ENCODE measurements at regions of chr7 and their contacts with region 1.

Region 1: GRCh38 chr7:106915873-106916272 is 50.8 kb downstream of the PIK3CG start:
- DNase-seq: peak; percentile 34
- ATAC-seq: peak; percentile 92
- H3K4me3 Mint-ChIP-seq: no peak overlapping the region
- H3K27ac Mint-ChIP-seq: no peak overlapping the region
- H3K4me1 Mint-ChIP-seq: peaks cover 5% of the 10 kb centered on the region
- H3K27me3 Mint-ChIP-seq: no peaks in the 10 kb centered on the region

Region 2: GRCh38 chr7:106568680-106569499 is 347.0 kb before region 1 on chr7:
- CTCF ChIA-PET with region 1: no interaction called
- POLR2A ChIA-PET with region 1: no interaction called
- intact Hi-C with region 1: loop called in 1 of 2 experiments (anchors 10 kb)
- DNase-seq: peak; percentile 22
- ATAC-seq: peak; percentile 82
- H3K4me3 Mint-ChIP-seq: no peak overlapping the region
- H3K27ac Mint-ChIP-seq: peak overlapping the region; percentile 92
- H3K4me1 Mint-ChIP-seq: peaks cover 12% of the 10 kb centered on the region
- H3K27me3 Mint-ChIP-seq: peaks cover 9% of the 10 kb centered on the region

Measured in activated CD4-positive, alpha-beta T cell treated with anti-CD3 and anti-CD28 coated beads for 36 hours (primary cell).